Aorta (tissue), 5 donors: ENCODE measurements at regions of chr12 and their contacts with region 1.

Region 1: DNA sequence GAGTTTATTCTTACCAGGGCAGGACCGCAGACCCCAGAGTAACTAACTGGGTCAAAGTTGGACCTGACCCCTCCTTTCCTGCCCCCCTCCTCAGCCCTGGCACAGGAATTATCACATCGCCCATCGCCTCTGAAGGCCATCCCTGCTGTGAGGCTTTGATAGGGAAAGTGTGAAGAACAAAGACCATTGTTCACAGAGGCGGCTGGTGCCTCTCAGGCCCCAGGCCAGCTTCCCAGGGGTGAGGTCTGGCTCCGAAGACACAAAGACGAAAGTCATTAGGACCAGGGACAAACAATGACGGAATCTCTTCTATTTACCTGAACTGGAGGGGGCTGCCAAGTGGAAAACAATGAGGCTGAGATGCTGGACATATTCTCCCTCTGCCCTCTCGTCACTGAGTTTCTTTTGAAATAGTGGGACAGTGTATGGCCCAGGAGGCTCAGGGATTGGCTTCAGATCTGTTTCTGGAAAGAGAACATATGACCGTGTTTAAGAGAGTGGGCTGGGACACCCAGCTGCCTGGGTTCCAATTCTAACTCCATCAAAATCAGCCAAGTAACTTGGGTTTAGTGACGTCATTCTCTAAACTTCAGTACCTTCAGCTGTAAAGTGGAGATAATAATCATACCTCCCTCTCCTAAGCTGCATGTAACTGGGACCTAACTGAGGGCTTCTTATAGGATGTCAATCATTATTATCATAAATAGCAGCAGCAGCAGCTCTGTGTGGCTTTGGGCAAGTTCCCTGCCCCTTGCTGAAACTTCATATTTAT is 769.4 kb downstream of the MED13L start:
- DNase-seq: no peak
- ATAC-seq: no peak
- H3K4me3 ChIP-seq: no peak overlapping the region
- H3K27ac ChIP-seq: no peak overlapping the region
- H3K4me1 ChIP-seq: no peaks in the 10 kb centered on the region
- H3K27me3 ChIP-seq: no peaks in the 10 kb centered on the region

Region 2: GRCh38 chr12:115910057-115910456 is 401.9 kb after region 1 on chr12:
- intact Hi-C with region 1: loop called in 1 of 2 experiments (anchors 5 kb)
- DNase-seq: no peak
- ATAC-seq: no peak
- H3K4me3 ChIP-seq: no peak overlapping the region
- H3K27ac ChIP-seq: no peak overlapping the region
- H3K4me1 ChIP-seq: no peaks in the 10 kb centered on the region
- H3K27me3 ChIP-seq: no peaks in the 10 kb centered on the region